Endothelial cell of umbilical vein (primary cell): ENCODE measurements at regions of chr13 and their contacts with region 1.

Region 1: DNA sequence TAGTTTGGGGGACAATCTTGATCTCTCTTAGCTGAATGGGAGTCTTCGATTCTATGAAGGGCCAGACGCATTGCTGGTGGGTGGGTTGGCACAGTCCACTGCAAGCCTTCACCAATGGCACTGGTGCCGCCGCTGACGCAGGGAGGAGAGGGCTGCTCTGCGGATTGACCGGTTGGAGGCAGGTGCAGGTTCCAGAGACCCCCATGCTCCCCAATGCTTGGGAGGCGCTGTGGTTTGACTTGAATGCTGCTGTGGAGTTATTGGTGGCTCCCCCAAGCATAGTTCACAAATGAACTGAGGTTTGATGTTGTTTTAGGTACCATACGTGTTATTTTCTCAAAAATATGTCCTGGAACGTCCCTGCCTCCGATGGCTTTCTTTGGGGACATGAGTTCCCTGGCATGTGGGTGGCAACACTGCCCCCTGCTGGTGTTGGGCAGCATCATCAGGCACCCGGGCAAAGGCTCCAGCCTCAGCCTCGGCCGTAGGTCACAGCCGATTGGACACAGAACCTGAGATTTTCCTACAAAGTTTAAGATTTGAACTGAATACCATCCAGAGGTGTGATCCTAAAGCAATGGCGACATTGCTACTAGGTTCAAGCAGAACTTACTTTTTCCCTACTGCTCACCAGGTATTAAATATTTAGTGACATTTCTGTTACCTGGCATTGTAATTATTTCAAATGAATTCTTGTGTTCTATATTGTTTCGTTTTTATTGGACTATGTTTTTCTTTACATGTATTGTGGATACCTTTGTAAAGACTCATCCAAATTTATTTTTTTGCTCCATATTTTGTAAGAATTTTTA is 95.5 kb downstream of the ANKRD10 start:
- DNase-seq: peak; percentile 74
- H3K4me3 ChIP-seq: no peak overlapping the region
- H3K27ac ChIP-seq: no peak overlapping the region
- H3K4me1 ChIP-seq: no peaks in the 10 kb centered on the region
- H3K27me3 ChIP-seq: peaks cover 0 to 3% of the 10 kb centered on the region in 2 experiments
- CTCF ChIP-seq: peak; percentile 92 to 97
- POLR2A ChIP-seq: no peak

Region 2: GRCh38 chr13:110593430-110594130 is 225.8 kb before region 1 on chr13:
- CTCF ChIA-PET with region 1: interaction called, 22 read pairs
- POLR2A ChIA-PET with region 1: no interaction called
- dilution Hi-C with region 1: no loop called
- intact Hi-C with region 1: loop called (anchors 1 kb)
- DNase-seq: peak; percentile 63
- H3K4me3 ChIP-seq: no peak overlapping the region
- H3K27ac ChIP-seq: no peak overlapping the region
- H3K4me1 ChIP-seq: no peaks in the 10 kb centered on the region
- H3K27me3 ChIP-seq: peaks cover 2 to 4% of the 10 kb centered on the region in 2 experiments
- CTCF ChIP-seq: peak; percentile 39 to 40
- POLR2A ChIP-seq: no peak

Region 3: GRCh38 chr13:110644892-110645521 is 174.4 kb before region 1 on chr13:
- CTCF ChIA-PET with region 1: interaction called, 12 read pairs
- POLR2A ChIA-PET with region 1: no interaction called
- dilution Hi-C with region 1: no loop called
- intact Hi-C with region 1: loop called (anchors 1 kb)
- DNase-seq: peak; percentile 50
- H3K4me3 ChIP-seq: no peak overlapping the region
- H3K27ac ChIP-seq: no peak overlapping the region
- H3K4me1 ChIP-seq: no peaks in the 10 kb centered on the region
- H3K27me3 ChIP-seq: no peaks in the 10 kb centered on the region
- CTCF ChIP-seq: peak; percentile 26 to 57
- POLR2A ChIP-seq: no peak

Region 4: GRCh38 chr13:110680851-110681250 is 138.6 kb before region 1 on chr13:
- CTCF ChIA-PET with region 1: interaction called, 9 read pairs
- POLR2A ChIA-PET with region 1: no interaction called
- dilution Hi-C with region 1: no loop called
- intact Hi-C with region 1: loop called (anchors 1 kb)
- DNase-seq: peak; percentile 20
- H3K4me3 ChIP-seq: no peak overlapping the region
- H3K27ac ChIP-seq: no peak overlapping the region
- H3K4me1 ChIP-seq: no peaks in the 10 kb centered on the region
- H3K27me3 ChIP-seq: no peaks in the 10 kb centered on the region
- CTCF ChIP-seq: peak; percentile 29 to 60
- POLR2A ChIP-seq: no peak